ENCODE measurements at regions of chr1 and their contacts with region 1.

Region 1: DNA sequence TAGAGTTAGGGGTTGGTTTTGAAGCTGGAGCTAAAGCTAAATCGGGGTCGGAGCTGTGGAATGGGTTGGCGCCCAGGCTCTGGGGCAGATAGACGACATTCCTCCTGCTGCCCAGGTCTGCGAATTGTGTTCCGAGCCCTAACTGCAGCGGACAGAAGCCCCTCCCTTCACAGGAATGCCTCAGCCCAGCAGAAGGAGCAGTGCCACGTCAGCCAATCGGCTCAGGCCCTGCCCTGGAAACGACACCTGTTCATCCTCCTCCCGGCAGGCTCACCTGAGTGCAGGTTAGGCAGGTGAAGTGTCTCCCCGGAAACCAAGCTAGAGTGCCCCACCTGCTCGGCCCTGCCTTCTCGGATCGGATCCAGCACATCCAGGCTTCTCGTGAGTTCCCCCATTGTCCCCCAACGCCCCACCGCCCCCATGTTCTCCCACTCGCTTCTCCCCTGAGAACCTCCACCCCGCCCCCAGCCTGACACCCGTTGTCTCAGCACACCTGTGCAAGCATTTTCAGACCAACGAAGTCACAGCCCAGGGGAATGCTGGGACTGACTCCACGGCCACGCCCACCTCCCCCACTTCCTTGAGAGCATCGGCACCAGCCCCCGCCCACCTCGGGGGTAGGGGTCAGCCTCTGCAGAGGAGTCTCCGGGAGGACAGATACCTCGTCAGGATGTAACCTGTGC is 771 bp downstream of the TMEM125 start:
- DNase-seq: peak; percentile 91 to 95
- H3K4me3 ChIP-seq: peak overlapping the region; percentile 45
- H3K4me3 Mint-ChIP-seq: peak overlapping the region; percentile 87
- H3K27ac Mint-ChIP-seq: peak overlapping the region; percentile 99
- H3K4me1 ChIP-seq: peaks cover 16% of the 10 kb centered on the region
- H3K4me1 Mint-ChIP-seq: peaks cover 17% of the 10 kb centered on the region
- H3K27me3 ChIP-seq: no peaks in the 10 kb centered on the region
- H3K27me3 Mint-ChIP-seq: no peaks in the 10 kb centered on the region
- CTCF ChIP-seq: no peak

Region 2: GRCh38 chr1:43256675-43257570 is 13.6 kb before region 1 on chr1:
- CTCF ChIA-PET with region 1: no interaction called
- POLR2A ChIA-PET with region 1: no interaction called
- intact Hi-C with region 1: no loop called
- DNase-seq: no peak
- H3K4me3 ChIP-seq: no peak overlapping the region
- H3K4me3 Mint-ChIP-seq: no peak overlapping the region
- H3K27ac Mint-ChIP-seq: no peak overlapping the region
- H3K4me1 ChIP-seq: no peaks in the 10 kb centered on the region
- H3K4me1 Mint-ChIP-seq: no peaks in the 10 kb centered on the region
- H3K27me3 ChIP-seq: no peaks in the 10 kb centered on the region
- H3K27me3 Mint-ChIP-seq: peaks cover 4% of the 10 kb centered on the region
- CTCF ChIP-seq: no peak

Region 3: GRCh38 chr1:43348809-43349583 is 78.4 kb after region 1 on chr1:
- CTCF ChIA-PET with region 1: no interaction called
- POLR2A ChIA-PET with region 1: interaction called, 7 read pairs
- intact Hi-C with region 1: loop called (anchors 2 kb)
- DNase-seq: peak; percentile 93 to 94
- H3K4me3 ChIP-seq: peak overlapping the region; percentile 48
- H3K4me3 Mint-ChIP-seq: peak overlapping the region; percentile 74
- H3K27ac Mint-ChIP-seq: peak overlapping the region; percentile 96
- H3K4me1 ChIP-seq: no peaks in the 10 kb centered on the region; the same call in 1 of the 2 replicates
- H3K4me1 Mint-ChIP-seq: peaks cover 23% of the 10 kb centered on the region
- H3K27me3 ChIP-seq: no peaks in the 10 kb centered on the region
- H3K27me3 Mint-ChIP-seq: no peaks in the 10 kb centered on the region
- CTCF ChIP-seq: no peak

Region 4: DNA sequence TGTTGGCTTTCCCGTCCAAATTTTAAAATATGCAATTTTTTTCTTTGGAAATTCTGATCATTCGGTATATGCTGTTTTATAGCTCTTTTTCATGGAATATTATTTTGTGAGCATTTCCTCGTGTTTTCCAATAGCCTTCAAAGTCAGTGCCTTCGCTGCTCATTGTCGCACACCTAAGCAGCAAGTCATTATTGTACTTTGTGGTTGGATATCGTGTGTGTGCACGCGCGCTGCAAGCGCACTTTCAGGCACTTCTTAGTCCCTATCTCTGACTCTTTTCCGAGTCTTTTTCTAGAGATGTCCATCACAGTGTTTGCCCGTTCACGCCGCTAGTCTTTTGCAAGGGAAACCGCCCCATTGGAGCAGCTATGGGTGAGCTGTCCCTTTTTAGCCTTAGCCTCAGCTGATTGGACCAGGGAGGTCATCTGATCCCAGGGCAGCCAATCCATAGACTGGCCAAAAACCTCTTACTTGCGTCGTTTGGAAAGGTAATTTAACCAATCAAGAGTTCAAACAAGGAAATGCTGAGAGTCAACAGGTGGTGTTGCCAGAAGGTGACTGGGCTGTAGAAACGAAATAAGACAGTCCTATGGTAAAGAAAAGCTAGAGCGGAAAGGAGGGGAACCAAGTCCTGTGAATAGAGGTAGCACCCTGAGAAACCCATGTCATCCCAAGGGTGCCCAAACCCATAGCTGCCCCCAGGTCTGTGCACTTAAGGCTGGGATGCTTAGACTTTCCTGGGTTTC is 183.9 kb after region 1 on chr1:
- CTCF ChIA-PET with region 1: no interaction called
- POLR2A ChIA-PET with region 1: no interaction called
- intact Hi-C with region 1: no loop called
- DNase-seq: peak; percentile 88 to 94
- H3K4me3 ChIP-seq: peak overlapping the region; percentile 59
- H3K4me3 Mint-ChIP-seq: peak overlapping the region; percentile 93
- H3K27ac Mint-ChIP-seq: peak overlapping the region; percentile 88
- H3K4me1 ChIP-seq: peaks cover 11% of the 10 kb centered on the region
- H3K4me1 Mint-ChIP-seq: peaks cover 9% of the 10 kb centered on the region
- H3K27me3 ChIP-seq: no peaks in the 10 kb centered on the region
- H3K27me3 Mint-ChIP-seq: no peaks in the 10 kb centered on the region
- CTCF ChIP-seq: no peak